Activated naive CD4-positive, alpha-beta T cell treated with anti-CD3 and anti-CD28 coated beads for 36 hours (primary cell): ENCODE measurements at regions of chr20 and their contacts with region 1.

Region 1: DNA sequence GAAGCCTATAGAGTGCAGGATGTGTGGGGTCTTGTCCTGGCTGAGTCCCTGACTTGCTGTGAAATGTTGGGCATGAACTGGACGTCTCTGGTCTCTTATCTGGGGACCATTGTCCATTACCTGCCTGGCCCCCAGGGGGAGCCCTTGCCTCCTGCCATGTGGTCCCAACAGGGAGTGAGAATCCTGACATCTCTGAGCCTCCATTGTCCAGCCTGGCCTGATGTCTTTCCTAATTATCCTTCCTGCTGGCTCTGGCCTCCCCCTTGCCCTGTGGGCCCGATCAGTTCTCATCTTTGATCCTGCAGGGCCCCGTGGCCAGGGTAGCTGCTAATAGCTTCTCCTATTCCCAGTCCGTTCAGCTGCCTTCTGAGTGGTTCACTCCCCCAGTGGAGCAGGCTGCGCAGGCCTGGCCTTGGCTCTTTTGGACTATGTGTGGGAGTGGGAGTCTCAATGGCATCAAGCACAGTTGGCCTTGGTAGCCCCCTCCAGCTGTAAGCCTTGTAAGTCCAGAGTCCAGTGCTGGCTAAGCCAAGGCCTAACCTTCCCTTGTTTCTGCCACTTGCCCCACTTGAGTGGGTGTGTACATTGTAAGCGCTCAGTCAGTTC is 77.9 kb upstream of the RALY start:
- DNase-seq: peak; percentile 71
- H3K4me3 Mint-ChIP-seq: no peak overlapping the region
- H3K27ac Mint-ChIP-seq: no peak overlapping the region
- H3K4me1 Mint-ChIP-seq: peaks cover 11% of the 10 kb centered on the region
- H3K27me3 Mint-ChIP-seq: no peaks in the 10 kb centered on the region

Region 2: DNA sequence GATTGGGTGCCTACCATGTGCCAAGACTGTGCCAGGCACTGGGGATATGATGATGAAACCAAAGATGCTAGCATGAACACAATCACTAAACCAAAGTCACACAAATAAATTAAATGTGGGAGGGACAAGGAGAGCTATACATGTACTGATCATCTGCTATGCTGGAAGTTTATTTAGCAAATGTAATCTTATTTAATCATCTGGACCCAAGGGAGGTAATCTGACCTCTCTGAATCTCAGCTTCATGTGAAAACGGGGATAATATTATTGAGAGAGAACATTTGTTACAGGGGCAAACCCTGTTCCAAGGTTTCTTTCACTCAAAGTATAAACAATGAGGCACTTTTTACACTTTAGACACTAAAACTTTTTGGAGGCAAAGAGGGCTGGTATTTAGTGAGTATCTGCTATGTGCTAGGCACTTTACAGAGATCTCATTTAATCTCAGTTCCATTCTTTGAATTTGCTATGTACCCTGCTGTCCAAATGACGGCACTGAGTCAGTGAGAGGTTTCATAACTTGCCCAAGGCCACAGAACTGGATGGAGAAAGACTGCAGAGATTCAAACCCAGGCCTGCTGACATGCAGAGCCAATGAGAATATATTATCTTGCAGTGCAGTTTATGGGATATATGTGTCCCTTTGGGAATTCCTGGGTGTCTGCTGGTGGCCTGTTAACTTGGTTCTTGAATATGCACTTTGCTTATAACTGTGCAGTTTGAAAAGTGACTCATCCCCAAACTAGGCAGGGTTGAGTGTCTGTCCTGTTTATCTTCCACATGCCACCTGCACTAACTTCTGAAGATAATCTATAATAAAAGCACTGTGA is 1561.0 kb before region 1 on chr20:
- CTCF ChIA-PET with region 1: no interaction called
- intact Hi-C with region 1: no loop called
- DNase-seq: peak; percentile 52
- H3K4me3 Mint-ChIP-seq: no peak overlapping the region
- H3K27ac Mint-ChIP-seq: peak overlapping the region; percentile 92
- H3K4me1 Mint-ChIP-seq: peaks cover 38% of the 10 kb centered on the region
- H3K27me3 Mint-ChIP-seq: no peaks in the 10 kb centered on the region

Region 3: DNA sequence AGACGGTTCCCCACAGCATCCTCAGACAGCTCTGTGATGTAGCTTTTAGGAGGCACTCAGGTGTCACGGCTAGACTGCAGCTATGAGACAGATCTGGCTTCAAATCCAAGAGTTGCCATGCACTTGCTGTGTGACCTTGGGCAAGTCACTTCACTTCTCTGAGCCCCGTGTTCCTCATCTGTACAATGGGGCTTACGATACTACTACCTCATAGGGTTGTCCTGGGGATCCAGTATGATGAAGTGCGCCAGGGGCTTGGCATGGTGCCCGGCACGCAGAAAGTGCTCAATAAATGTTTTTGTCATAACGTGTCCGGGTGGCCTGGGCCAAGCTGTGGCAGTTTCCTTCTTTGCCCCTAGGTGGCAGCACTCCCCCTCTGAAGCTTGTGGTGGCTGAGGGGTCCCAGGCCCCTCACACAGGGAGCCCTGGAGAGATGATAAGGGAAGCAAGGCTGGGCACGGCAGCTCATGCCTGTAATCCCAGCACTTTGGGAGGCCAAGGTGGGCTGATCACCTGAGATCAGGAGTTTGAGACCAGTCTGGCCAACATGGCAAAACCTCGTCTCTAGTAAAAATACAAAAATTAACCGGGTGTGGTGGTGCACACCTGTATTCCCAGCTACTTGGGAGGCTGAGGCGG is 123.8 kb before region 1 on chr20:
- CTCF ChIA-PET with region 1: interaction called, 25 read pairs
- intact Hi-C with region 1: loop called (anchors 1 kb)
- DNase-seq: peak; percentile 60
- H3K4me3 Mint-ChIP-seq: no peak overlapping the region
- H3K27ac Mint-ChIP-seq: no peak overlapping the region
- H3K4me1 Mint-ChIP-seq: no peaks in the 10 kb centered on the region
- H3K27me3 Mint-ChIP-seq: no peaks in the 10 kb centered on the region

Region 4: DNA sequence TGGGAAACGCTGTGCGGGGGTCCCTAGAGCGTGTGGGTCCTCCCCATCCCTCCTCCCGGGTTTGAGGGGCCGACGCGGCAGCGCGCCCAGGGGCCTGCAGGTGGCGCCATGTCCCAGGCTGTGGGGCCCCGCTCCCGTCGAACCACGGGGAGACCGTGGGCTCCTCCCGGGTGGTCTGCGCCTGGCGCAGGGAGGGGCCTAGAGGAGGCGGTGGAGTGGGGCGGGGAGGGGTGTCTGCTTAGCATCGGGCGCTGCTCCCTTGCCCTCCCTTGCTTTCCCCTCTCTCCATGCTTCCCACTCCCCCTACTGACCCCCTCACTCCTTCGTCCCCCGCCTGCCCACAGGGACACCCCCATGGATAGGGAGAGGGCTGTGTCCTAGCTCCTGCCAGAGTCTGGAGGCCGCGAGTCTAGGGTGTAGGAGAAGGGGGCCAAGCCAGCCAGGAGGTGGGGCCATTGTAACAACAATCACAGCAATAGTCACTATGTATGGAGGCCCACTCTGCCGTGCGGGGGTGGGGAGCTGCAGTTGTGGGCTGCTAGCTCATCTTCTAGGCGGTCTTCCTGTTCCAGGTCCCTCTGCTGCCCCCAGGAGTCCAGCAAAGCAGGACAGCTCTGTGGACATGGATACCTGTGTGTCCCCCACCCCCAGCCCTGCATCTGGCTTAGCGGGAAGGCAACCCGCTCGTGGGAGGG is 53.0 kb before region 1 on chr20:
- CTCF ChIA-PET with region 1: interaction called, 7 read pairs
- intact Hi-C with region 1: loop called (anchors 2 kb)
- DNase-seq: peak; percentile 57
- H3K4me3 Mint-ChIP-seq: no peak overlapping the region
- H3K27ac Mint-ChIP-seq: no peak overlapping the region
- H3K4me1 Mint-ChIP-seq: peaks cover 19% of the 10 kb centered on the region
- H3K27me3 Mint-ChIP-seq: no peaks in the 10 kb centered on the region

Region 5: DNA sequence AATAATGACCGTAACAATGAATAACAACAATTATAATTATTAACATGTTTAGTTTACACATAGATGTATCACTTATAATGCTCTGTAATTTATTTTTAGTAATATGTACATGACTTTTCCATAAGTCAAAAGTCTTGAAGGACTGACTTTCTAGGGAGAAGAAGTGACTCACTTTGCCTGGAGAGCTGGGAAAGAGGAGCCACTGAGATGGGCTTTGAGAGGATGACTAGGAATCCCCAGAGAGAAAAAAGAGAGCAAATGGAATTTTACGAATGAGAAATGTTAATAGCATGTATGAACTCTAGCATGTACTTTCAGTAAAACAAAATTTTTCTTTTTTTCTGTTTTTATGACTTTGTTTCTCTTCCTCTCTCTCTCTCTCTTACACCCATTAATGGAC is 10.0 kb after region 1 on chr20:
- CTCF ChIA-PET with region 1: interaction called, 10 read pairs
- intact Hi-C with region 1: no loop called
- DNase-seq: no peak
- H3K4me3 Mint-ChIP-seq: no peak overlapping the region
- H3K27ac Mint-ChIP-seq: no peak overlapping the region
- H3K4me1 Mint-ChIP-seq: no peaks in the 10 kb centered on the region
- H3K27me3 Mint-ChIP-seq: no peaks in the 10 kb centered on the region

Region 6: DNA sequence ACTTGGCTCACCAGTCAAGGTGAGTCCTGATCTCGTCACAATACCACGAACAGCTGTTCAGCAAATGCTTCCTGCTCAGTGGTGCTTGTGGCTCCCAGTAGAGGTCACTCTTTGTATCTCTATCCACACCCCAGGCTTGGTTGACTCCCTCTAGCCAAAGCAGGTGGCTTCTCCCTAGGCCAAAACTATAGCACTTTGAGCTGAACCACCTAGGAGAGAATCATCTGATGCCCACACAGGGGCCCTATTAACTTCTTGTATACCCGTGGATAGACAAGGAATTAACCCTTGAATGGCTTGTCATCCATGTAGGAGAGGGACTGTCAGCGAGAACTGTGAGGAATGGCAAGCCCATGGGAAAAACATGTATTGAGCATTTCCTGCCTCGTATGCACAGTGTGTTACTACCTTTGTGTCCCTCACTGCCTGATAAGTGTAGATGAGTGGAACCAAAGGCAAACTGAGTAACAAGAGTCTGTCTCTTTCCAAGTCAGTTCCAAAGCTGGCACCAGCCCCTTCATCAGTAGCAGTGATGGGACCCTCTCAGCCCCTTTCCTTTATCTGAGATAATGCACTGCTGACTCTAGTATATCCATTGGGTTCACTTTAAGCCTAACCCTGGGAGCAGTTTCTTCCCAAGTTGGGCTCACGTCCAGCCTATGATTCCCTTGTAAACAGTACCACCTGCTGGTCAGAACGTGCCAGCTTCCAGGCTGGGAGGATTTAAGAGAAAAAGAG is 153.7 kb after region 1 on chr20:
- CTCF ChIA-PET with region 1: interaction called, 38 read pairs
- intact Hi-C with region 1: loop called (anchors 1 kb)
- DNase-seq: peak; percentile 72
- H3K4me3 Mint-ChIP-seq: no peak overlapping the region
- H3K27ac Mint-ChIP-seq: no peak overlapping the region
- H3K4me1 Mint-ChIP-seq: peaks cover 28% of the 10 kb centered on the region
- H3K27me3 Mint-ChIP-seq: no peaks in the 10 kb centered on the region